ENCODE measurements at regions of chr1 and their contacts with region 1.

Region 1: DNA sequence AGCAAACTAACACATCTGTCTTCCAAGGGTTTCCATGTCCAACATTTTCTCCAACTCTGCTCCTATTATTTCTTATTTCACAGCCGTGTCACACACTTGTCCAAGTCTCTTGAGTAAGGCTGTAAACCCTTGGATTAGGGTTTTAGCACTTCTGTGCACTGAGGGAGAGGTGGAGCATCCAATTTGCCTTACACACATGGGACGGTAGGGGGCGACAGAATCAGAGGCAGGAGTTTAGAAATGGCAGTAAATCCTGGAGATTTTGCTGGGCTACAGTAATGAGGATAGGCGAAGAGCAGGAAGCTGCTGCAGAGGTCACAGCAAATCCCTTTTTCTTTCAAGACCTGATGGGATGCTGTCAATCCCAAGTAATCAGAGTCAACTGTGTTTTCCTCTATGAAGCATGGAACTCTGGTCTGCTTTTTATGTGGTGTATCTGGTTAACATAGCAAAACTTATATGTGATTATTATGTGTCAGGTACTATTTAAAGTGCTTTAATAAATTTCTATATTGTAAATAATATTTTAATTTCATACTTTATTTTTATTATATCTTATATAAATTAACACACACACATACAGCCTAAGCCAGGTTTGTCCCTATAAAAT is 15.4 kb upstream of the LCE5A start:
- DNase-seq: peak; percentile 37
- CTCF ChIP-seq: peak; percentile 60

Region 2: GRCh38 chr1:152479792-152480595 is 15.2 kb before region 1 on chr1:
- CTCF ChIA-PET with region 1: interaction called, 10 read pairs
- POLR2A ChIA-PET with region 1: no interaction called
- DNase-seq: peak; percentile 43
- CTCF ChIP-seq: peak; percentile 38

Region 3: GRCh38 chr1:152517237-152517811 is 22.2 kb after region 1 on chr1:
- CTCF ChIA-PET with region 1: interaction called, 10 read pairs
- POLR2A ChIA-PET with region 1: no interaction called
- DNase-seq: no peak
- CTCF ChIP-seq: no peak

Region 4: GRCh38 chr1:152533327-152533938 is 38.3 kb after region 1 on chr1:
- CTCF ChIA-PET with region 1: interaction called, 14 read pairs
- POLR2A ChIA-PET with region 1: no interaction called
- DNase-seq: peak; percentile 43
- CTCF ChIP-seq: peak; percentile 78

Region 5: GRCh38 chr1:153415850-153416570 is 920.8 kb after region 1 on chr1 and contains the start of gene S100A7A:
- CTCF ChIA-PET with region 1: no interaction called
- POLR2A ChIA-PET with region 1: no interaction called
- DNase-seq: no peak
- CTCF ChIP-seq: no peak

Measured in GM10248 (cell line).